Activated CD8-positive, alpha-beta memory T cell treated with anti-CD3 and anti-CD28 coated beads, Interleukin-2, amount 10 ng/mL, durations not matched to agents 7 days and 5 days (primary cell): ENCODE measurements at regions of chr14 and their contacts with region 1.

Region 1: GRCh38 chr14:76926521-76927251 is 100.5 kb downstream of the LRRC74A start:
- DNase-seq: peak; percentile 88
- ATAC-seq: peak; percentile 79
- H3K4me3 Mint-ChIP-seq: peak overlapping the region; percentile 32
- H3K27ac Mint-ChIP-seq: peak overlapping the region; percentile 79
- H3K4me1 Mint-ChIP-seq: peaks cover 65% of the 10 kb centered on the region
- H3K27me3 Mint-ChIP-seq: no peaks in the 10 kb centered on the region

Region 2: DNA sequence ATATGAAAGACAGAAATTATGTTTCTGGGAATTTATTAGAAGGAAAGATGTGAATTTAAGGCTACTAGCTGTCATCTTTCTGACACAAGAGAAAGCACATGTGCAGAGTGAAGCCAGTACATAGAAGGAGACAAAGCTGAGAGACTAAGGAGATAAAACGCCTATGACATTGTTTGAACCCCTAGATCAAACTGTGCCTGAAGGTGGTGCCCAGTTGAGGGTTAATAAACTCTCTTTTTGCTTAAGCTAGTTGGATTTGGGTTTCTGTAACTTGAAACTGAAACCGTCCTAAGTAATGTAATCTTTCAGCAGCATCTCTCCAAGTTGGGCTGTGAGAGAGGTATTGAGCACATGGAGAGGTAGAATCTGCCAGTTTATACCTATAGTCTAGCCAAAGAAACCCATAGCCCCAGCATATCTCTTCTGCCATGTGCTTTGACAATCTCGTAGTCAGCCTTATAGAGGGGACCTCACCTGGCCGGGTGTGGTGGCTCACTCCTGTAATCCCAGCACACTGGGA is 16.3 kb before region 1 on chr14:
- CTCF ChIA-PET with region 1: interaction called, 58 read pairs
- DNase-seq: no peak
- ATAC-seq: no peak
- H3K4me3 Mint-ChIP-seq: no peak overlapping the region
- H3K27ac Mint-ChIP-seq: no peak overlapping the region
- H3K4me1 Mint-ChIP-seq: peaks cover 49% of the 10 kb centered on the region
- H3K27me3 Mint-ChIP-seq: no peaks in the 10 kb centered on the region

Region 3: GRCh38 chr14:76941946-76942805 is 15.5 kb after region 1 on chr14:
- CTCF ChIA-PET with region 1: interaction called, 31 read pairs
- DNase-seq: no peak
- ATAC-seq: no peak
- H3K4me3 Mint-ChIP-seq: no peak overlapping the region
- H3K27ac Mint-ChIP-seq: peak overlapping the region; percentile 33
- H3K4me1 Mint-ChIP-seq: peaks cover 18% of the 10 kb centered on the region
- H3K27me3 Mint-ChIP-seq: no peaks in the 10 kb centered on the region

Region 4: GRCh38 chr14:76956316-76957090 is 29.8 kb after region 1 on chr14:
- CTCF ChIA-PET with region 1: interaction called, 11 read pairs
- DNase-seq: peak; percentile 95
- ATAC-seq: peak; percentile 67
- H3K4me3 Mint-ChIP-seq: peak overlapping the region; percentile 70
- H3K27ac Mint-ChIP-seq: peak overlapping the region; percentile 91
- H3K4me1 Mint-ChIP-seq: peaks cover 74% of the 10 kb centered on the region
- H3K27me3 Mint-ChIP-seq: no peaks in the 10 kb centered on the region

Region 5: GRCh38 chr14:76962303-76962660 is 35.6 kb after region 1 on chr14:
- CTCF ChIA-PET with region 1: interaction called, 11 read pairs
- DNase-seq: peak; percentile 48
- ATAC-seq: peak; percentile 11
- H3K4me3 Mint-ChIP-seq: peak overlapping the region; percentile 42
- H3K27ac Mint-ChIP-seq: peak overlapping the region; percentile 95
- H3K4me1 Mint-ChIP-seq: peaks cover 74% of the 10 kb centered on the region
- H3K27me3 Mint-ChIP-seq: peaks cover 46% of the 10 kb centered on the region

Region 6: DNA sequence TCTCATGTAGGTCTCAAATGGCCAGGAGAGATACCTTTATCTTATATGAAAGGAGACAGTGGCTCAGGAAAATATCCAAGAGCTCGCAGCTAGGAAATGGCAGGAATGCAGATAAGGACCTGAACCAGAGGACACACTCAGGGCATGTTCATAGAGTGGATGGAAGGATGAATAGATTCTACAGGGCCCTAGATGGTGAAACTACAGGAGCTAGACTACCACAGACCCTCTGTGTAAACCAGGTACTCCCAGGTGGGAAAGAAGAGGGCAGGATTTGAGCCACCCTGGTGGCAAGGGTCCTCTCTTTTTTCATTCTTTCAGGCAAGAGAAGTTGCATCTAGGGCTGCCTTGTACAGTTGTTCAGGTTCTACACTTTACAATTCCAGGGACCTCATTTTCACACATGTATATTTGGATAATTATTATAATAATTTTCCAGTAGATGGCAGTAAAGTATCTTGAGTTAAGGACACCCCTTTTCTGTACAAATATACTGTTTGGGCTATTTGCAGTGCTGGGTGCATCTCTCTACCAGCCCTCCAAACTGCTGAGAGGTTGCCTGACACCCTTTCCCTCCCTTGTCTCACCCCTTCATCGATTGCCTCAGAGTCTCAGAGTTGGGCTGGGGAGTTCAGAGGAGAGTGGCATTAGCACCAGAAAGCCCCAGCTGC is 225.4 kb after region 1 on chr14:
- CTCF ChIA-PET with region 1: no interaction called
- DNase-seq: no peak
- ATAC-seq: peak; percentile 61
- H3K4me3 Mint-ChIP-seq: no peak overlapping the region
- H3K27ac Mint-ChIP-seq: no peak overlapping the region
- H3K4me1 Mint-ChIP-seq: no peaks in the 10 kb centered on the region
- H3K27me3 Mint-ChIP-seq: peaks cover 31% of the 10 kb centered on the region